Activated naive CD4-positive, alpha-beta T cell treated with anti-CD3 and anti-CD28 coated beads, Interleukin-2, amount 10 ng/mL, durations not matched to agents 7 days and 5 days (primary cell): ENCODE measurements at regions of chr4 and their contacts with region 1.

Region 1: GRCh38 chr4:121900132-121900983 is 30.1 kb upstream of the BBS7 start:
- DNase-seq: peak; percentile 64
- H3K4me3 Mint-ChIP-seq: no peak overlapping the region
- H3K27ac Mint-ChIP-seq: no peak overlapping the region
- H3K4me1 Mint-ChIP-seq: peaks cover 7% of the 10 kb centered on the region
- H3K27me3 Mint-ChIP-seq: no peaks in the 10 kb centered on the region

Region 2: DNA sequence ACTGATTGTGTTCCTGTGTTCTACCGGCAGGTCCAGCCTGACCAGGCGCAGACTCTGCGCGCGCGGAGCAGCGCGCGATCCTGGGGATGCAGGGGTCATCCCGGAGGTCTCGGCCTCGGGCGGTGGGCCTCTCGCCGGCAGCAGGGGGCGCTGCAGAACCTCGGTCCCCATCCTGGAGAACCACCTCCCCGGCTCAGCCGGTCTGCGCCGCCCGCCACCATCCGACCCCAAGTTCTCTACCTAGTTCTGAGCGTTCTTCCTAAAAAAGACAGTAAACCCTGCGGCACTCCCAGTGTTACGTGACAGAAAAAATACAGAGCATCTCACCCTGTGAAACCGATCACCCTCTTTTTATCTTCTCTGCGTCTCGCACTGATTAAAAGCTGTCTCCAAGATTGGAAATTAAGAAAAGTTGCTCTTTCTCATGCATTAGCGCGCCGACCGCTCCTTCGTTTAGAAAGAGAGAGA is 49.9 kb after region 1 on chr4:
- CTCF ChIA-PET with region 1: interaction called, 12 read pairs
- DNase-seq: peak; percentile 91
- H3K4me3 Mint-ChIP-seq: peak overlapping the region; percentile 80
- H3K27ac Mint-ChIP-seq: peak overlapping the region; percentile 58
- H3K4me1 Mint-ChIP-seq: peaks cover 24% of the 10 kb centered on the region
- H3K27me3 Mint-ChIP-seq: peaks cover 60% of the 10 kb centered on the region